CD8-positive, alpha-beta T cell (primary cell): ENCODE measurements at regions of chr16 and their contacts with region 1.

Region 1: DNA sequence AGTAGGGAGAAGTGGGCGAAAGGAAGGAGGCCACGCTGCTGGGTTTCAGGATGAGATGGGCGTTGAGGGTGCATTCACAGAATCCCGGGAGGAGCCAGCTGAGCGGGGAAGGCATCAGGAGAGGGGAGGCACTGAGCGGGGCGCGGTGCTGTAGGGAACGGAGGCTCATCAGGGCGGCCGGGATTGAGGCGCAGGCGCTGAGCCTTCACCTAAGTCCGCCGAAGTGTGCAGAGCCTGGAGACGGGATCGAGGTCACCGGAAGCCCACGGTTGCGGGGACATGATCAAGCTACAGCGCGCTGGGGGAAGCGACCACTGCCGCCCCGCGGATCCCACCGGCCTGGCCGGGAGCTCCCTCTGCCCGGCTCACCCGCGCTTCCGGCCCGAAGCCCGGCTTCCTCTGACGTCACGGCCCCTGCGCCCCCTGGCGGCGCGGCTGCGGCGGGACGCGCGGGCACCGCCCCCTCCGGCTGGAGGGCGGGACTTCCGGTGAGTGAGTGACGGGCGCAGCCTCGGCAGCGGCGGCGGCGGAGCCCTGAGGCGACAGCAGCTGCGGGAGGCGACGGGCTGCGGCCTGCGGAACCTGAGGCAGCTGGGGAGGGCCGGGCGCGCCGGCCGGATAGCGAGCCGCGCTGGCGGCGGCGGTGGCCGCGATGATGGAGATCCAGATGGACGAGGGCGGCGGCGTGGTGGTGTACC is at the start of gene MAPK8IP3:
- DNase-seq: peak; percentile 88 to 99 (median 95)
- ATAC-seq: peak; percentile 74
- H3K4me3 ChIP-seq: peak within 1 kb of the TSS; percentile 94 to 99
- H3K4me3 Mint-ChIP-seq: peak within 1 kb of the TSS; percentile 99
- H3K27ac ChIP-seq: peak within 1 kb of the TSS; percentile 83 to 90
- H3K27ac Mint-ChIP-seq: peak within 1 kb of the TSS; percentile 97
- H3K4me1 ChIP-seq: peaks cover 32% of the 10 kb centered on the region
- H3K4me1 Mint-ChIP-seq: peaks cover 43% of the 10 kb centered on the region
- H3K27me3 ChIP-seq: no peaks in the 10 kb centered on the region
- H3K27me3 Mint-ChIP-seq: no peaks in the 10 kb centered on the region
- CTCF ChIP-seq: peak; percentile 92
- total RNA-seq, gene MAPK8IP3: 381 to 419 TPM

Region 2: DNA sequence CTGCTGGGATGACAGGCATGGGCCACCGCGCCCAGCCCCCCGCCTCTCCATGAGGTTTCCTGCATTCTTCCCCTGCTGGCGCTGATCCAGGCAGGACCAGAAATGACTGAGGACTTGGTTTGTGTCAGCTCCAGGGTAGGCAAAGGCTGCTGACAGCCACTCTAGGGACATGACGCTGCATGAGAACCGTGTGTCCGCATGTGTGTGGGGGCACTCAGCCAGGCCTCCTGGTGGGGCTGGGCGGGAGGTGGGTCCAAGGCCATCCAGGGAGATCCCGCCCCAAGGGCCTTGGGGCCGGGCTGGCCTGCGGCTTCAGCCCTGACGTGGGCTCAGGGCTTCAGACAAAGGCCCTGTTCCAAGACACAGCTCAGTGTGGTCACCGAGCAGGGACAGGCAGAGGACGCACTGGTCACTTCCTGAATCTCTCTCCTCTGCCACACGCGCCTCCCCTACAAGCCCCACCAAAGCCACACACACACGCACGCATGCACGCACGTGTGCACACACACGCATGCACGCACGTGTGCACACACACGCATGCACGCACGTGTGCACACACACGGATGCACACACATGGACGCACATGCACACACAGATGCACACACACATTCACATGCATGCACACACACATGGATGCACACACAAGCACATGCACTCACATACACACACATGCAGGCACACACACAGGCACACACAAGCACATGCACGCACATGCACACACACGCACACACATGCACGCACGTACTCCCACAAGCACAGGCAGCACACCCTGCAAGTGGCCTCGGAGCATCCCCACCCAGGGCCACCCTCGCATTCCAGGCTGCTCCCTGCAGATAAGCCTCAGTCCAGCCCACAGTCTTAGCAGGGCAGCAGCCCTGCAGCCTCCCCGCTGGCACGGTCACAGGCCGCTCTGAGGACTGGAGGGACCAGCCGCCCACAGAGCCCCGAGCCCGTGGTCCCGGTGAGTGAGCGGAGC is 177.7 kb before region 1 on chr16:
- CTCF ChIA-PET with region 1: interaction called, 4 read pairs
- POLR2A ChIA-PET with region 1: interaction called, 4 read pairs
- intact Hi-C with region 1: loop called in 1 of 2 experiments (anchors 2 kb)
- DNase-seq: no peak
- ATAC-seq: no peak
- H3K4me3 ChIP-seq: no peak overlapping the region
- H3K4me3 Mint-ChIP-seq: peak overlapping the region; percentile 85
- H3K27ac ChIP-seq: no peak overlapping the region
- H3K27ac Mint-ChIP-seq: peak overlapping the region; percentile 37
- H3K4me1 ChIP-seq: peaks cover 44% of the 10 kb centered on the region
- H3K4me1 Mint-ChIP-seq: peaks cover 38% of the 10 kb centered on the region
- H3K27me3 ChIP-seq: no peaks in the 10 kb centered on the region
- H3K27me3 Mint-ChIP-seq: no peaks in the 10 kb centered on the region
- CTCF ChIP-seq: no peak

Region 3: GRCh38 chr16:1543085-1543896 is 162.5 kb before region 1 on chr16:
- CTCF ChIA-PET with region 1: no interaction called
- POLR2A ChIA-PET with region 1: interaction called, 3 read pairs
- intact Hi-C with region 1: loop called in 1 of 2 experiments (anchors 1 kb)
- DNase-seq: peak in 5 of 9 experiments; percentile 42 to 65 (median 48)
- ATAC-seq: peak; percentile 68
- H3K4me3 ChIP-seq: no peak overlapping the region
- H3K4me3 Mint-ChIP-seq: peak overlapping the region; percentile 44
- H3K27ac ChIP-seq: peak overlapping the region; percentile 4 to 44
- H3K27ac Mint-ChIP-seq: peak overlapping the region; percentile 76
- H3K4me1 ChIP-seq: peaks cover 93% of the 10 kb centered on the region
- H3K4me1 Mint-ChIP-seq: peaks cover 71% of the 10 kb centered on the region
- H3K27me3 ChIP-seq: no peaks in the 10 kb centered on the region
- H3K27me3 Mint-ChIP-seq: no peaks in the 10 kb centered on the region
- CTCF ChIP-seq: no peak

Region 4: DNA sequence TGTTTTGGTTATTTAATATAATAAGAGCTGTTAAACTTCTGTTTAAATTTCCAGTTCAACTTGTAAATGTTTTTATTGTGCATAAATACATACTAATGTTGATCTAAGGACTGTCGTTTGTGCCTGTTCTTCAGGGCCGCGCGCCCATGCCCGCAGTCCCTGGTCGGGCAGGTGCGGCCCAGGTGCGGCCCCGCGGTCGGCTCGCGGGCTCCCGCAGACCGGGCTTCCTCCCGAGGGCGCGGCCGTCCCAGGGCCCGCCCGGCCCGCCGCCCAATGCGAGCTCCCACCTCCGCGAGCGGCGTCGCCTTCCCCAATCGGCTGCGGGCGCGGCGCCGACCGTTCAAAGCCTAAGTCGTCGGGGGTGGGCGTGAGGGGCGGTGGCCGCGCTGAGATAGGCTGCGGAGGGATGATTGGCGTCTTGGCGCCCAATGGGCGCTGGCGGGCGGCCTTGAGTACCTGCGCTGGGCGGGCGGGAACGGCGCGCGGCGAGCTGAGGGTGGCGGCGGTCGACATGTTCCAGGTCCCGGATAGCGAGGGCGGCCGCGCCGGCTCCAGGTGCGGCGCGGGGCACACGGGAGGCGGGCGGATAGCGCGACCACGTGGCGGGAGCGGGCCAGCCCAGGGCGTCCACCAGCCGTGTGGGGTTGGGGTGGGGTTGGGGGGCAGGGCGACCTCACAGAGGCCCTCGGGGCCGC is 27.9 kb before region 1 on chr16 and contains the start of gene JPT2:
- CTCF ChIA-PET with region 1: interaction called, 8 read pairs
- POLR2A ChIA-PET with region 1: interaction called, 26 read pairs
- intact Hi-C with region 1: loop called (anchors 1 kb)
- DNase-seq: peak; percentile 87 to 98 (median 95)
- ATAC-seq: peak; percentile 97
- H3K4me3 ChIP-seq: peak within 1 kb of the TSS; percentile 54 to 57
- H3K4me3 Mint-ChIP-seq: peak within 1 kb of the TSS; percentile 88
- H3K27ac ChIP-seq: peak within 1 kb of the TSS; percentile 31 to 37
- H3K27ac Mint-ChIP-seq: peak within 1 kb of the TSS; percentile 62
- H3K4me1 ChIP-seq: peaks cover 15% of the 10 kb centered on the region
- H3K4me1 Mint-ChIP-seq: peaks cover 27% of the 10 kb centered on the region
- H3K27me3 ChIP-seq: no peaks in the 10 kb centered on the region
- H3K27me3 Mint-ChIP-seq: no peaks in the 10 kb centered on the region
- CTCF ChIP-seq: no peak
- total RNA-seq, gene JPT2: 1.4 to 2.8 TPM

Region 5: GRCh38 chr16:1723450-1724147 is 17.8 kb after region 1 on chr16:
- CTCF ChIA-PET with region 1: interaction called, 4 read pairs
- POLR2A ChIA-PET with region 1: interaction called, 5 read pairs
- intact Hi-C with region 1: loop called in 1 of 2 experiments (anchors 1 kb)
- DNase-seq: peak in 5 of 9 experiments; percentile 21 to 67 (median 55)
- ATAC-seq: peak; percentile 61
- H3K4me3 ChIP-seq: no peak overlapping the region
- H3K4me3 Mint-ChIP-seq: peak overlapping the region; percentile 3
- H3K27ac ChIP-seq: peak overlapping the region in 1 of 2 experiments; percentile 53
- H3K27ac Mint-ChIP-seq: peak overlapping the region; percentile 28
- H3K4me1 ChIP-seq: peaks cover 32% of the 10 kb centered on the region
- H3K4me1 Mint-ChIP-seq: peaks cover 37% of the 10 kb centered on the region
- H3K27me3 ChIP-seq: no peaks in the 10 kb centered on the region
- H3K27me3 Mint-ChIP-seq: no peaks in the 10 kb centered on the region
- CTCF ChIP-seq: peak; percentile 85

Region 6: GRCh38 chr16:1772736-1773584 is 67.1 kb after region 1 on chr16 and contains the starts of genes EME2 and MRPS34:
- CTCF ChIA-PET with region 1: interaction called, 6 read pairs
- POLR2A ChIA-PET with region 1: interaction called, 6 read pairs
- intact Hi-C with region 1: loop called (anchors 1 to 2 kb)
- DNase-seq: peak; percentile 54 to 89 (median 78)
- ATAC-seq: peak; percentile 48
- H3K4me3 ChIP-seq: peak within 1 kb of the TSS; percentile 79 to 91
- H3K4me3 Mint-ChIP-seq: peak within 1 kb of the TSS; percentile 96
- H3K27ac ChIP-seq: peak within 1 kb of the TSS; percentile 57 to 66
- H3K27ac Mint-ChIP-seq: peak within 1 kb of the TSS; percentile 96
- H3K4me1 ChIP-seq: peaks cover 30% of the 10 kb centered on the region
- H3K4me1 Mint-ChIP-seq: peaks cover 19% of the 10 kb centered on the region
- H3K27me3 ChIP-seq: no peaks in the 10 kb centered on the region
- H3K27me3 Mint-ChIP-seq: no peaks in the 10 kb centered on the region
- CTCF ChIP-seq: peak; percentile 92
- total RNA-seq, gene EME2: 27.5 to 31.7 TPM
- total RNA-seq, gene MRPS34: 18.9 to 21.4 TPM

Region 7: GRCh38 chr16:1826691-1827575 is 121.1 kb after region 1 on chr16 and contains the starts of genes FAHD1 and HAGH:
- CTCF ChIA-PET with region 1: no interaction called
- POLR2A ChIA-PET with region 1: interaction called, 5 read pairs
- intact Hi-C with region 1: loop called in 1 of 2 experiments (anchors 2 kb)
- DNase-seq: peak; percentile 83 to 96 (median 89)
- ATAC-seq: peak; percentile 79
- H3K4me3 ChIP-seq: peak within 1 kb of the TSS; percentile 72 to 91
- H3K4me3 Mint-ChIP-seq: peak within 1 kb of the TSS; percentile 90
- H3K27ac ChIP-seq: peak within 1 kb of the TSS; percentile 73 to 78
- H3K27ac Mint-ChIP-seq: peak within 1 kb of the TSS; percentile 95
- H3K4me1 ChIP-seq: peaks cover 46% of the 10 kb centered on the region
- H3K4me1 Mint-ChIP-seq: peaks cover 48% of the 10 kb centered on the region
- H3K27me3 ChIP-seq: no peaks in the 10 kb centered on the region
- H3K27me3 Mint-ChIP-seq: no peaks in the 10 kb centered on the region
- CTCF ChIP-seq: no peak
- total RNA-seq, gene FAHD1: 11.7 to 13.7 TPM
- total RNA-seq, gene HAGH: 32.5 to 41.1 TPM

Region 8: GRCh38 chr16:1899641-1900451 is 194.0 kb after region 1 on chr16:
- CTCF ChIA-PET with region 1: no interaction called
- POLR2A ChIA-PET with region 1: no interaction called
- intact Hi-C with region 1: no loop called
- DNase-seq: no peak
- ATAC-seq: no peak
- H3K4me3 ChIP-seq: no peak overlapping the region
- H3K4me3 Mint-ChIP-seq: no peak overlapping the region
- H3K27ac ChIP-seq: no peak overlapping the region
- H3K27ac Mint-ChIP-seq: no peak overlapping the region
- H3K4me1 ChIP-seq: no peaks in the 10 kb centered on the region
- H3K4me1 Mint-ChIP-seq: no peaks in the 10 kb centered on the region
- H3K27me3 ChIP-seq: no peaks in the 10 kb centered on the region
- H3K27me3 Mint-ChIP-seq: peaks cover 7% of the 10 kb centered on the region
- CTCF ChIP-seq: no peak